ENCODE measurements at regions of chr12 and their contacts with region 1.

Region 1: DNA sequence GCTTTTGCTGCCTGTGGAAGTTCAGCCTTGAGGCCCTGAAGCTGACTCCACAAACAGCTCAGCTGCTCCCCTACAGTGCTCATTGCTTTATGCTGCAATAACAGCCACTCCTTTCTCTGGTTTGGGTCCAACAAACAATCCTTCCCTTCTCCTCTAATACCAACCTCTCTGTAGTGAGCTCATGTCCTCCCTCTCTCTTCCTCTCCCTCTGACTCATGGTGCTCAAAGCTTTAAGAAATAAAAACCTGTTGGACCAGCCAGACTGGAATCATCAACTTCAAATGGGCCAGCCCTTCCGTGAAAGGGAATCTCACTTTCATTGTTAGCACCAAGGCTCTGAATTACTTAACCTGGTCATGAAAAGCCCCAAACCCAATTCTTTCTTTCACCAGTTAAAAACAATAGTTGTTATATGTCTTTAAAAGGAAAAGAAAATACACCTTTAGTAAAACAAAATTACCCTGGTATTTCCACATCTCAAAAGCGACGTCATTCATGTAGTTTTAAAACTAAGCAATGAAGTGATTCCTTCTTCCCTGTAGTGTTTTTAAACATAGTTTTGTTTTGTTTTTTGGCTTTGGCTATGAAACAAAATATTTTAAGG is 126.4 kb downstream of the DUSP6 start:
- DNase-seq: no peak
- ATAC-seq: peak; percentile 74
- H3K4me3 ChIP-seq: no peak overlapping the region
- H3K27ac ChIP-seq: no peak overlapping the region
- H3K4me1 ChIP-seq: peaks cover 0 to 2% of the 10 kb centered on the region in 2 donors
- H3K27me3 ChIP-seq: no peaks in the 10 kb centered on the region

Region 2: DNA sequence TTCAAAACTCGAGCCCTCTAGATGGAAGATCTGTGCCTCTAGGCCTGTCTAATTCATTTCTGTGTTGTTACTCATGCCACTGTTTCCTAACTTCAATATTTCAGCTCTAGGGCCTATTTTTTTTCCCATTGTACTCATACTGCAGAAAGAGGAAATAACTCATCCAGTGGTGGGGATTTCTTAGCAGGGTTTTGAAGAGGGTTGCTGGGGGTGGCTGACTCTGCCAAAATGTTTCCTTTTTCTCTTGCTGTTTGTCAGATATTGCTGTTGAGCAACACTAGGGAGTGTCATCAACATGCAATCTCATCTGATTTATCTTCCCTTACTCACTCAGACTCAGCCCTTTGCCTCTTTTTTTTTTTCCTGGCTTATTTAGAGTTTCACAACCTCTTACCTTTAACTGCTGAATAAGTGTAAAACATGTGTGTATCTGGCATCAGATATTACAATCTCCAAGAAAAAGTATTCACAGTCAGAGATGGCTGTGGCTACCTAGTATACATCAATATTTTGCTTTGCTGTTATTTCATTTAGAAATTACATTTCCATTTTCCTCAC is 63.1 kb before region 1 on chr12:
- intact Hi-C with region 1: loop called in 1 of 2 experiments (anchors 10 kb)
- DNase-seq: peak; percentile 72 to 81
- ATAC-seq: peak; percentile 89
- H3K4me3 ChIP-seq: no peak overlapping the region
- H3K27ac ChIP-seq: no peak overlapping the region
- H3K4me1 ChIP-seq: peaks cover 0 to 2% of the 10 kb centered on the region in 2 donors
- H3K27me3 ChIP-seq: no peaks in the 10 kb centered on the region

Measured in aorta (tissue), 5 donors.